ENCODE measurements at regions of chr17 and their contacts with region 1.

Region 1: GRCh38 chr17:72890711-72891110 is 201.8 kb downstream of the SLC39A11 start:
- DNase-seq: no peak
- ATAC-seq: no peak
- H3K4me3 ChIP-seq: no peak overlapping the region
- H3K27ac ChIP-seq: no peak overlapping the region
- H3K4me1 ChIP-seq: no peaks in the 10 kb centered on the region
- H3K27me3 ChIP-seq: no peaks in the 10 kb centered on the region
- CTCF ChIP-seq: no peak

Region 2: DNA sequence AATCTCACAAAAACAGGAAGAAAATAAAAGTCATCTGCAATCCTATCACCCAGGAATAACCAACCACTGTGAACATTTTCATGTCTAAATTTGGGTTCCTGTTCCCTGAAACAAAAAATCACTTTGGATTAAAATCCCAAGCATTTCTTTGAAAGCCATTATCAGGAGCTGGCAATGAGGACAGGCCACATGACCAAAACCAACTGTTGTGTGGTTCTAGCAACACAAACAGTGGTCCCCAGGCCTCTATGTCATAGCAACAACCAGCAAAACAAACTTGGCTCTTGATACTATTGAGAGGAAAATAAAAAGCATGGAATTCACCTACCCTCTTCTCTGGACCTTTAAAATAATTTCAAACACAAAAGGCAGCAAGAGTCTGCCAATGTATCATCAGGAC is 50.7 kb before region 1 on chr17:
- intact Hi-C with region 1: loop called in 1 of 2 experiments (anchors 5 kb)
- DNase-seq: no peak
- ATAC-seq: no peak
- H3K4me3 ChIP-seq: no peak overlapping the region
- H3K27ac ChIP-seq: no peak overlapping the region
- H3K4me1 ChIP-seq: no peaks in the 10 kb centered on the region
- H3K27me3 ChIP-seq: no peaks in the 10 kb centered on the region
- CTCF ChIP-seq: no peak

Measured in psoas muscle (tissue), 8 donors.